B cell (primary cell): ENCODE measurements at regions of chr14 and their contacts with region 1.

Region 1: GRCh38 chr14:39232554-39233415 is 930 bp upstream of the MIA2 start:
- DNase-seq: no peak
- ATAC-seq: no peak
- H3K4me3 ChIP-seq: no peak overlapping the region
- H3K4me3 Mint-ChIP-seq: no peak overlapping the region
- H3K27ac ChIP-seq: no peak overlapping the region
- H3K27ac Mint-ChIP-seq: no peak overlapping the region
- H3K4me1 ChIP-seq: no peaks in the 10 kb centered on the region
- H3K4me1 Mint-ChIP-seq: peaks cover 4% of the 10 kb centered on the region
- H3K27me3 ChIP-seq: no peaks in the 10 kb centered on the region
- H3K27me3 Mint-ChIP-seq: no peaks in the 10 kb centered on the region
- CTCF ChIP-seq: no peak

Region 2: DNA sequence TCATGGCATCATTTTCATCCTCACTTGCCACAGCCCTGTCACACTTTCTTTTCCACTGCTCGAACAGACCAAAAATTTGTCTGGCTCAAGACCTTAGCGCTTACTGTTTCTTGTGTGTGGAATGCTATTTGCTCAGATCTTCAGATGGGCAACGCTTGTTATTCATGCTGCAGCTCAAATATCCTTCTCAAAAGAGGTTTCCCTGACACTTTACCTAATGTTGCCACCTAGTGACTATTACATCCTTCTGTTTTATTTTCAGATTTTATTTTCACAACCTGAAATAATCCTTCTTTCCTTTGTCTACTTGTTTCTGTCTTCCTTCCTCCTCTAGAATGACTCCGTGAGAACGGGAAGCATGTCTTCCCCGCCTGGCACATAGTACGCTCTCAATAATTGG is 193.8 kb after region 1 on chr14:
- CTCF ChIA-PET with region 1: interaction called, 10 read pairs
- POLR2A ChIA-PET with region 1: interaction called, 3 read pairs
- intact Hi-C with region 1: no loop called
- DNase-seq: peak; percentile 21
- ATAC-seq: no peak
- H3K4me3 ChIP-seq: no peak overlapping the region
- H3K4me3 Mint-ChIP-seq: no peak overlapping the region
- H3K27ac ChIP-seq: no peak overlapping the region
- H3K27ac Mint-ChIP-seq: no peak overlapping the region
- H3K4me1 ChIP-seq: peaks cover 27 to 30% of the 10 kb centered on the region in 2 donors
- H3K4me1 Mint-ChIP-seq: peaks cover 62% of the 10 kb centered on the region
- H3K27me3 ChIP-seq: no peaks in the 10 kb centered on the region
- H3K27me3 Mint-ChIP-seq: no peaks in the 10 kb centered on the region
- CTCF ChIP-seq: peak; percentile 28

Region 3: GRCh38 chr14:39469094-39469710 is 236.4 kb after region 1 on chr14:
- CTCF ChIA-PET with region 1: interaction called, 6 read pairs
- POLR2A ChIA-PET with region 1: no interaction called
- intact Hi-C with region 1: loop called (anchors 1 kb)
- DNase-seq: peak; percentile 53
- ATAC-seq: peak; percentile 62
- H3K4me3 ChIP-seq: no peak overlapping the region
- H3K4me3 Mint-ChIP-seq: no peak overlapping the region
- H3K27ac ChIP-seq: no peak overlapping the region
- H3K27ac Mint-ChIP-seq: no peak overlapping the region
- H3K4me1 ChIP-seq: no peaks in the 10 kb centered on the region
- H3K4me1 Mint-ChIP-seq: no peaks in the 10 kb centered on the region
- H3K27me3 ChIP-seq: peaks cover 0 to 5% (median 0%) of the 10 kb centered on the region in 4 experiments
- H3K27me3 Mint-ChIP-seq: peaks cover 23% of the 10 kb centered on the region
- CTCF ChIP-seq: peak; percentile 55